ENCODE measurements at regions of chr5 and their contacts with region 1.

Region 1: GRCh38 chr5:146049014-146049703 is 56.2 kb downstream of the PLAC8L1 start:
- DNase-seq: peak; percentile 29
- ATAC-seq: peak; percentile 62 to 65

Region 2: GRCh38 chr5:144203750-144204596 is 1845.2 kb before region 1 on chr5:
- intact Hi-C with region 1: loop called in 1 of 2 experiments (anchors 10 kb)
- DNase-seq: no peak
- ATAC-seq: peak; percentile 74 to 75

Region 3: GRCh38 chr5:145681686-145682085 is 367.5 kb before region 1 on chr5:
- intact Hi-C with region 1: loop called in 1 of 2 experiments (anchors 10 kb)
- DNase-seq: peak; percentile 41
- ATAC-seq: peak; percentile 80 to 91

Region 4: GRCh38 chr5:145701387-145701786 is 347.8 kb before region 1 on chr5:
- intact Hi-C with region 1: loop called in 1 of 2 experiments (anchors 5 kb)
- DNase-seq: no peak
- ATAC-seq: no peak

Region 5: GRCh38 chr5:145834917-145835847 is 214.0 kb before region 1 on chr5 and contains the start of gene PRELID2:
- intact Hi-C with region 1: loop called in 1 of 2 experiments (anchors 10 kb)
- DNase-seq: peak; percentile 93
- ATAC-seq: peak; percentile 96 to 97
- total RNA-seq, gene PRELID2: 21.1 to 23.1 TPM

Region 6: DNA sequence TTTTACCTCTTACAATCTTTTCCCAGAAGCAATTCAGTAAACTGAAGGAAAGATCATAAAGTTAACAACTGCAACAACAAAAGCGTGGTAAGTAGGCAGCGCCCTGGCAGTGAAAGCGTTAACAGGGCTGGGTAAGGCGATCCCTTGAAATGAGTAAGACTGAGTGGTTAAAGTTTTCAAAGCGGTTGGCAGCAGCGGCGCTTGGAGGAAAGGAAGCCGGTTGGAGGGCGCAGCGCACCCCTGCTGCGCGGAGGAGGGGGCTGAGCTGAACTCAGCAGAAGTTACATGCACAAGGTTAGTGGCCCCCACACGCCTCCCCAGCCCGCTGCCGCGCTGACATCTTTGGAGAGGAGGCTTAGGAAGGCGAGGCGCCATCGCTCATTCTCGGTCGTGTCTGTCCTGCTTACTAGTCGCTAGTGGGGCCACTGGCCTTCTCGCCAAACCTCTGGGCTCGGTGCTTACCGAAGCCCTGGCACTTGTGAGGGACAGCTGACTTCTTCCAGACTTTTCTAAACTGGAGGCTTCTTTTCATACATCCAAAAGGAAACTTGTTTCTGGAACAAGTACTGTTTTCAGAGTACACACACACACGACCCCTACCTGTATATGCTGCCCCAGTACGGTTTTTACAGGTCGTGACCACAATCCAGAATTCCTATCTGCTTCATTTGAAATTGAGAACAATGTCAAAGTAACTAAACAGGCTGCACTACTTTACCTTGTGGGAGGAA is 112.6 kb before region 1 on chr5 and contains the start of gene SH3RF2:
- intact Hi-C with region 1: loop called in 1 of 2 experiments (anchors 10 kb)
- DNase-seq: peak; percentile 38
- ATAC-seq: peak; percentile 90
- total RNA-seq, gene SH3RF2: 56.2 to 179 TPM

Region 7: DNA sequence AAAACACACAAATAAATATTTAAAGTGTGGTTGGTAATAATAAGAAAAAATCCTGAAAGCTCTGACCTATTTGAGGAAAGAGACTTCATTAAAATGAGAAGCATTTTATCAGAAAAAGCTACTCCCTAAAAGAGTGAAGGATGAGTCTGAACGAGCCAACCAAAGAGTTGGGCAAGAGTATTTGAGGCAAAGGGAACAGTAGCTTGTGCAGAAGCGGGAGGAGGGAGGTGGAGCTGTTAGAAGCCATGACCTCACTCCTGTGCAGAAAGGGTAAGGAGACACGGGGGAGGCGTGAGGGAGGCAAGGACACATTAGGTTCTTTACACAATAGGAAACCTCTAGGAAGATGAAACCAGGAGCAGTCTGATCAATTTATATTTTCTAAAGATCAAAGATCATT is 83.4 kb before region 1 on chr5:
- intact Hi-C with region 1: no loop called
- DNase-seq: peak; percentile 25
- ATAC-seq: peak; percentile 89 to 94

Region 8: GRCh38 chr5:146426853-146427618 is 377.9 kb after region 1 on chr5:
- intact Hi-C with region 1: no loop called
- DNase-seq: no peak
- ATAC-seq: peak; percentile 50 to 67